CD4-positive, alpha-beta memory T cell (primary cell): ENCODE measurements at regions of chr12 and their contacts with region 1.

Region 1: GRCh38 chr12:21751517-21751916 is 23.0 kb downstream of the KCNJ8 start:
- DNase-seq: no peak
- H3K4me3 ChIP-seq: no peak overlapping the region
- H3K4me3 Mint-ChIP-seq: no peak overlapping the region
- H3K27ac ChIP-seq: no peak overlapping the region
- H3K27ac Mint-ChIP-seq: no peak overlapping the region
- H3K4me1 ChIP-seq: no peaks in the 10 kb centered on the region
- H3K4me1 Mint-ChIP-seq: no peaks in the 10 kb centered on the region
- H3K27me3 ChIP-seq: no peaks in the 10 kb centered on the region
- H3K27me3 Mint-ChIP-seq: peaks cover 16 to 22% of the 10 kb centered on the region in 2 donors

Region 2: DNA sequence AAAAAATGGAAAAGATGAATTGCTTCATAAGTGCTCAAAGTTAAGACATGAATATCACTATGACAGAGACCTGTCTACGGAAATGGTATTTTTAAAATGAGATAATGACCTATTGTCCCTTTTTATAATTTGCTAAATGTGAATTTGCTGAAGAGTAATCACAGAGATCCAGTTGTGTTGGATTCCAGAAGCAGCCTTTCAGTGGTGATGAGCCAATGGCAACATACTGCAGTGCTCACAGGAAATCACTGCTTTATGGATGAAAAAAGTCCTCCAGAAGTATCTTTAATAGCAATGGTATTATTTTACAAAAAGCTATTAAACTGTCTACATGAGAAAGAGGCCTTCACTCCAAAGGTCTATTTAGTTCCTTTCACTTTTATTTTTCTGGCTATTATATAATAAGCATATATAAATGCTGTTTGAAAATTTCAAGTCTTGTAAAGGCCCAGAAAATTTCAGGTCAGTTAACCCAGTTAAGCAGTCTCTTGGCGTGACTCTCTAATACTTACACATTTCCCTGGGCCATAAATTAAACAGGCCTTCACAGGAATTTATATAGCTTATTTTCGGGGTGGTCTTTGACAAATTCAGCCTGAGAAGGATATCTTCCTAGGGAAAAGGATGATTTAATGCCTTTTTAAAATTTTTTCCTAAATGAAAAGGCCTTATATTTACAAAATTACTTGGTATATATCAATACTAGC is 32.4 kb before region 1 on chr12:
- CTCF ChIA-PET with region 1: no interaction called
- POLR2A ChIA-PET with region 1: no interaction called
- intact Hi-C with region 1: loop called (anchors 5 kb)
- DNase-seq: no peak
- H3K4me3 ChIP-seq: no peak overlapping the region
- H3K4me3 Mint-ChIP-seq: no peak overlapping the region
- H3K27ac ChIP-seq: no peak overlapping the region
- H3K27ac Mint-ChIP-seq: no peak overlapping the region
- H3K4me1 ChIP-seq: no peaks in the 10 kb centered on the region
- H3K4me1 Mint-ChIP-seq: peaks cover 0 to 4% (median 0%) of the 10 kb centered on the region in 4 donors
- H3K27me3 ChIP-seq: no peaks in the 10 kb centered on the region
- H3K27me3 Mint-ChIP-seq: peaks cover 3 to 7% of the 10 kb centered on the region in 2 donors

Region 3: GRCh38 chr12:22334410-22335290 is 583.1 kb after region 1 on chr12 and contains the start of gene ST8SIA1:
- CTCF ChIA-PET with region 1: no interaction called
- POLR2A ChIA-PET with region 1: no interaction called
- intact Hi-C with region 1: no loop called
- DNase-seq: peak; percentile 72 to 80 (median 75)
- H3K4me3 ChIP-seq: peak within 1 kb of the TSS; percentile 71 to 93
- H3K4me3 Mint-ChIP-seq: peak within 1 kb of the TSS; percentile 92 to 98 (median 96)
- H3K27ac ChIP-seq: peak within 1 kb of the TSS; percentile 75
- H3K27ac Mint-ChIP-seq: peak within 1 kb of the TSS; percentile 90 to 99 (median 93)
- H3K4me1 ChIP-seq: peaks cover 38% of the 10 kb centered on the region
- H3K4me1 Mint-ChIP-seq: peaks cover 40 to 60% (median 41%) of the 10 kb centered on the region in 4 donors
- H3K27me3 ChIP-seq: no peaks in the 10 kb centered on the region
- H3K27me3 Mint-ChIP-seq: peaks cover 0 to 2% of the 10 kb centered on the region in 2 donors
- total RNA-seq, gene ST8SIA1: 52.2 to 53.6 TPM